ENCODE measurements at regions of chr11 and their contacts with region 1.

Region 1: GRCh38 chr11:69642913-69643632 is 2.1 kb downstream of the CCND1 start:
- DNase-seq: peak; percentile 77
- H3K4me3 ChIP-seq: peak overlapping the region; percentile 52 to 90 (median 61)
- H3K27ac ChIP-seq: peak overlapping the region; percentile 67
- H3K4me1 ChIP-seq: peaks cover 29% of the 10 kb centered on the region
- H3K27me3 ChIP-seq: no peaks in the 10 kb centered on the region
- CTCF ChIP-seq: peak; percentile 88 to 91
- POLR2A ChIP-seq: no peak

Region 2: DNA sequence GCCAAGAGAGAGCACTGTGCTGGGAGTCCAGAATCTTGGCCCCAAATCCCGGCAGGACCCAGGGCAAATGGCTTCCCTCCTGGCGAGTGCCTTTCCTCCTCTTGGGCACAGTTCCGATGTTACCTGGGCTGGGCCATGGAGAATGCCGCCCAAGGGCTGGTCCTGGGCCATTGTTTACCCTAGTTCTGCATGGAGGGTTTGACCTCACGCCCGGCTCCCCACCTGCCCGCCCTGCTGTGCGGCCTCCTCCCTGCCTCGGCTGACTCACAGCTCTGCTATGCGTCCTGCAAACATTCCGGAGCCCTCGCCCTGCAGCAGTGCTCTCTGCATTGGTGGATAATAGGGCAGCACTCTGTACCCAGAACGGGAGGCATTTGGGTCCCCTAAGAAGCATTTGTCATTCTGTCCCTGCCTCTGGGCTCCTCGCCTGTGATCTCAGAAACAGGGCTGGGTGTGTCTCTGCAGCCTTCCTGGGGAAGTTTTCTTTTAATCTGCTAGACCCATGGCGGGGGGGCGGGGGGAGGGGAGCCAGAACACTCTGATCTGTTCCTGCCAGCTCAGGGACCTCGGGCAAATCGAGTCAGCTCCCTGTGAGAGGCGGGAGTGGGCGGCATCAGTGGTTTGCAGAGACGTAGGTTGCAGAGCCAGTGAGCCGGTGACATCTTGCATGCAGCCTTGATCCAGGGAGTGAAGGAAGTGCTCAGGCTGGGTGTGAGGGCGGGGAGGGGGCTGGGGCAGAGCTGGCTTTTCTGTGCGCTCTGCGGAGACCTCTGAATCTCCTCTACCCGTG is 520.2 kb before region 1 on chr11:
- CTCF ChIA-PET with region 1: no interaction called
- POLR2A ChIA-PET with region 1: no interaction called
- dilution Hi-C with region 1: no loop called
- intact Hi-C with region 1: loop called (anchors 2 kb)
- DNase-seq: peak; percentile 64
- H3K4me3 ChIP-seq: no peak overlapping the region
- H3K27ac ChIP-seq: no peak overlapping the region
- H3K4me1 ChIP-seq: peaks cover 18% of the 10 kb centered on the region
- H3K27me3 ChIP-seq: no peaks in the 10 kb centered on the region
- CTCF ChIP-seq: no peak
- POLR2A ChIP-seq: no peak

Region 3: DNA sequence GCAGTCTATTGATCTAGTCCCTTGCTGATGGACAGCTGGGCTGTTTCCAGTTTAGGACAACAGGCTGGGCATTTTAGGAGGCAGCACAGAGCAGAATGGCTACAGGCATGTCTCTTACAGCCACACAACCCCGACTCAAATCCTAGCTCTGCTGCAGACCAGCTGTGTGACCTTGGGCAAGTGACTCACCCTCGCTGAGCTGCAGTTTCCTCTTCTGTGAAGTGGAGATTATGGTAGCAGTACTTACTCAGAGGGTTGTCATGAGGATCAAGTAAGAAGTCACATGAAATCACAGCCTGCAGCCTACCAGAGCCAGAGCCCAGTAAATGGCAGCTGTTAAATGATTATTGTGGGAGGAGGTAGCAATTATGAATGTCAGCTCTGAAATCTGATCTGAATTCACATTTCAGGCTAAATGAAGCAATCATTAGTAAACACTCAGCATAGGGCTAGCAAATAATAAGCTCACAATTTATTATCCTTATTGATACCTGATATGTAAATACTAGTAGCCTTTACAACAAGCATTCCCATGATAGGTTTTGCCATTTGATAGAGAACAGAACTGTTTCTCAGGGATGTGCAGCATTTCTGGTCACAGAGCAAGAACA is 290.3 kb before region 1 on chr11:
- CTCF ChIA-PET with region 1: interaction called, 7 read pairs
- POLR2A ChIA-PET with region 1: no interaction called
- dilution Hi-C with region 1: no loop called
- intact Hi-C with region 1: loop called (anchors 1 kb)
- DNase-seq: peak; percentile 96
- H3K4me3 ChIP-seq: no peak overlapping the region
- H3K27ac ChIP-seq: peak overlapping the region; percentile 90
- H3K4me1 ChIP-seq: peaks cover 47% of the 10 kb centered on the region
- H3K27me3 ChIP-seq: no peaks in the 10 kb centered on the region
- CTCF ChIP-seq: no peak
- POLR2A ChIP-seq: peak; percentile 73

Region 4: DNA sequence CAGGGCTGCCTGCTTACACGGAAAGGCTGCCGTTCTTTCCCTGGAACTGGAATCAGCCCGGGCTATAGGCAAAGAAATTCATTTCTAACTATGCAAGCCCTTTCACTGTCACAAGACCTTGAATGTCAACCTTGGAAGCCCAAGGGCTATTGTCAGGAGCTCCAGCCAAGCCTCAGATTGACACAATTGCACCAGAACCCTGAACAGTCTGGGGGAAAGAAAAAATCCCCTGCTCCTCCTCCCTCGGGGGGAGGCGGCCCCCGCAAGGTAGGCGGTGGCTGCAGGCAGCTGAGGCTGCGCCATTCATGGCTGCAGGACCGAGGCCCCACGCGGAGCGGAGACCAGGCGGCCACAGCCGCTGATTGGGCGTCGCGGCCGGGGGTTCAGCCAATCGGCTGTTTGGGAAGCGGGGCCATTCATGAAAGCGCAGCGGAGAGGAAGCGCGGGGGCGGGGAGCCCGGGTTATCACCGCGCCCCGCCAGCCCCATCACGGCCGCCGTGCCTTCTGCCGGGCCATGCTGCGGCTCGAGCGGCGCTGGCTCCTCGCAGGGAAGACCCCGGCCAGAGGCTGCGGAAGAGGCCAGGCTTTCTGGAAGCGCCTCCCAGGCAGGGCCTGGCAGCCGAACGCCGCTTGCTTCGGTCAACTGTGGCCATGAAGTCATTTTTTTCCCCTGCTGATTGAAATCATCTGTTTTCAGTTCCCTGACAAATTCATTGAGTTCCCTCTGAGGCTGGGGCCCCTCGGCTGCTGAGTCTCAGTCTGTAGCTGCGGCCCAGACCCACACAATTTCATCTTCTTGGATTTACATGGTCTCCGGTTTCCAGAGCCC is 199.7 kb before region 1 on chr11:
- CTCF ChIA-PET with region 1: interaction called, 6 read pairs
- POLR2A ChIA-PET with region 1: interaction called, 4 read pairs
- dilution Hi-C with region 1: no loop called
- intact Hi-C with region 1: loop called (anchors 1 kb)
- DNase-seq: peak; percentile 91
- H3K4me3 ChIP-seq: peak overlapping the region in 2 of 3 experiments; percentile 10 to 23
- H3K27ac ChIP-seq: peak overlapping the region; percentile 89
- H3K4me1 ChIP-seq: peaks cover 34% of the 10 kb centered on the region
- H3K27me3 ChIP-seq: no peaks in the 10 kb centered on the region
- CTCF ChIP-seq: no peak
- POLR2A ChIP-seq: peak; percentile 91

Region 5: DNA sequence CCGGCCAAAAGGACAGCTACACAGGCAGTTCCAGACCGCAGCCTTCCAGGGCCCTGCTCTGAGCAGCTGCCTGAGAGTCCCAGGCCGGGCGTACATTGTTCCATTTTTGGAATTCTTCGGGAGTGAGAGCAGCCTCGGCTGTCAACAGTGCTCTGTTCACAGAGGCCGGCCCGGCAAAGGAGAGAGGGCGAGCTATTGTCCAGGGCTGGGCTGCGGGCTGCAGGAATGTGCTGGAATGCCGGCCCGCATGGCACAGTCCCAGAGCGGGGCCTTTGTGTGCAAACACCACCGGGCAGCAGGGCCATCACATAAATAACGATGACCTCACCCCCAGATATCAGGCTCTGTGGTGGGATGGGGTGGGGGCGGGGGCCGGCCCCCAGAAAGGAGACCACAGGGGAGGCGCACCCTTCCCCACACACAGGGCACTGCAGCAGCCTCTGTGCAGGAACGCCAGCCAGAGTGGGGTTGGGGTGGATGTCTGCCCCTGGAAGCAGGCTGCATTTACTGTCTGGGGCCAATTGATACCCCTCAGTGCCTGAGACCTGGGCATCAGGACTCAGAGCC is 145.8 kb before region 1 on chr11:
- CTCF ChIA-PET with region 1: interaction called, 3 read pairs
- POLR2A ChIA-PET with region 1: no interaction called
- dilution Hi-C with region 1: no loop called
- intact Hi-C with region 1: loop called (anchors 1 kb)
- DNase-seq: peak; percentile 83
- H3K4me3 ChIP-seq: no peak overlapping the region
- H3K27ac ChIP-seq: peak overlapping the region; percentile 57
- H3K4me1 ChIP-seq: peaks cover 29% of the 10 kb centered on the region
- H3K27me3 ChIP-seq: no peaks in the 10 kb centered on the region
- CTCF ChIP-seq: no peak
- POLR2A ChIP-seq: no peak